ENCODE measurements at regions of chr21 and their contacts with region 1.

Region 1: DNA sequence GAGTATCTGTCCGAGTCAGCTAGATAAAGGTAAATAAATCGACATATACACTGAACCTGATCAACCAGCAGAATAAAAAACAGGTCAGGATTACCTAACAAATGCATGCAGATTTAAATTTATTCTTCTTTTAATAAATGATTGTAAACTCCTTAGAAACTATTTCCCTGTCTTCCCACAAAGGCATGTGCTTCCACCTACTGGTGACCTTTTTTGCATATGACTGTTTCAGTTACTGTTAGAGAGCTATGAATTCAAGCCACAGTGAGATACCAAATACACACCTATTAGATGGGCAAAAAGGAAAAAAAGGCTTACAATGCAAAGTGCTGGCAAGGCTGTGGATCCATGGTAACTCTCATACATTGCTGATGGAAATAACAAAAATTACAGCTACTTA is 957.4 kb upstream of the NCAM2 start:
- DNase-seq: no peak
- H3K4me3 ChIP-seq: no peak overlapping the region
- H3K27ac ChIP-seq: no peak overlapping the region
- H3K4me1 ChIP-seq: no peaks in the 10 kb centered on the region
- H3K27me3 ChIP-seq: no peaks in the 10 kb centered on the region
- CTCF ChIP-seq: peak in 1 of 3 donors; percentile 40
- POLR2A ChIP-seq: no peak

Region 2: GRCh38 chr21:20030390-20030789 is 10.4 kb before region 1 on chr21:
- intact Hi-C with region 1: no loop called
- DNase-seq: peak in 1 of 2 donors; percentile 32
- H3K4me3 ChIP-seq: no peak overlapping the region
- H3K27ac ChIP-seq: no peak overlapping the region
- H3K4me1 ChIP-seq: no peaks in the 10 kb centered on the region
- H3K27me3 ChIP-seq: no peaks in the 10 kb centered on the region
- CTCF ChIP-seq: no peak
- POLR2A ChIP-seq: no peak

Region 3: GRCh38 chr21:20789736-20790500 is 749.1 kb after region 1 on chr21:
- intact Hi-C with region 1: loop called (anchors 5 kb)
- DNase-seq: no peak
- H3K4me3 ChIP-seq: no peak overlapping the region
- H3K27ac ChIP-seq: no peak overlapping the region
- H3K4me1 ChIP-seq: no peaks in the 10 kb centered on the region
- H3K27me3 ChIP-seq: no peaks in the 10 kb centered on the region
- CTCF ChIP-seq: no peak
- POLR2A ChIP-seq: no peak